T-cell (primary cell): ENCODE measurements at regions of chrX and their contacts with region 1.

Region 1: GRCh38 chrX:136028251-136028984 is 43.2 kb downstream of the SLC9A6 start:
- DNase-seq: peak in 2 of 35 experiments; percentile 1 to 69
- ATAC-seq: peak; percentile 52 to 66 (median 56)
- H3K4me3 ChIP-seq: no peak overlapping the region
- H3K4me3 Mint-ChIP-seq: no peak overlapping the region
- H3K27ac ChIP-seq: no peak overlapping the region
- H3K27ac Mint-ChIP-seq: no peak overlapping the region
- H3K4me1 ChIP-seq: no peaks in the 10 kb centered on the region
- H3K4me1 Mint-ChIP-seq: no peaks in the 10 kb centered on the region
- H3K27me3 ChIP-seq: no peaks in the 10 kb centered on the region
- H3K27me3 Mint-ChIP-seq: peaks cover 0 to 10% of the 10 kb centered on the region in 2 donors

Region 2: DNA sequence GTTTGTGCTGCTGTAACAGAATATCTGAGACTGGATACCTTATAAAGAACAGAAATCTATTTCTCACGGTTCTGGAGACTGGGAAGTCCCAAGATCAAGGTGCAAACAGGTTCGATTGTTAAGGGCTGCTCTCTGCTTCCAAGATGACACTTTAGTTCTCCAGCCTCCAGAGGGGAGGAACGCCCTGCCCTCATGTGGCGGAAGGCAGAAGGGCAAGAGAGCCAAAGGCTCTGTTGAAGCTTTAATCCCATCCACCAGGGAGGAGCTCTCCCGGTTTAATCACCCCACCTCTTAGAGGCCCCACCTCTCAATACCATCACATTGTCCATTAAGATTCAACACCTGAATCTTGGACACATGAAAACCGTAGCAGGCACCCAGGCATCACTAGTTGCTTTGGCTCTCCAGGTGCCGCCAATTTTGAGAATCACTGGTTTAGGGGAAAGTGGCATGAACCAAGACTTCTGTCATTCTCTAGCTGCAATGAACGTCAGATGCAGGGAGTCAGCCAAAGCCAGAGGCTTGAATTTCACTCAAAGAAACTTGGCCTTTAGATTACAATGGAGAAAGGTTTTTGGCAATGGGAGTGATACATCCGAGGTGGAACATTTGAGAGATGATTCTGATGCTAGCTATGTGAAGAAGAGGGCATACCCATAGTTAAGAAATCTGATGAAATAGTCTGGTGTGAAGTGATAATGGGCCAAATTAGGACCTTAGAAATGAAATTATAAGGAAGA is 134.6 kb after region 1 on chrX:
- CTCF ChIA-PET with region 1: interaction called, 22 to 50 read pairs
- POLR2A ChIA-PET with region 1: interaction called in 1 of 2 experiments, 3 read pairs
- DNase-seq: peak in 25 of 35 experiments; percentile 16 to 56 (median 32)
- ATAC-seq: peak in 3 of 4 experiments; percentile 55 to 74 (median 58)
- H3K4me3 ChIP-seq: no peak overlapping the region
- H3K4me3 Mint-ChIP-seq: no peak overlapping the region
- H3K27ac ChIP-seq: no peak overlapping the region
- H3K27ac Mint-ChIP-seq: no peak overlapping the region
- H3K4me1 ChIP-seq: no peaks in the 10 kb centered on the region
- H3K4me1 Mint-ChIP-seq: peaks cover 5 to 13% (median 10%) of the 10 kb centered on the region in 3 donors
- H3K27me3 ChIP-seq: no peaks in the 10 kb centered on the region
- H3K27me3 Mint-ChIP-seq: peaks cover 0 to 17% of the 10 kb centered on the region in 2 donors

Region 3: DNA sequence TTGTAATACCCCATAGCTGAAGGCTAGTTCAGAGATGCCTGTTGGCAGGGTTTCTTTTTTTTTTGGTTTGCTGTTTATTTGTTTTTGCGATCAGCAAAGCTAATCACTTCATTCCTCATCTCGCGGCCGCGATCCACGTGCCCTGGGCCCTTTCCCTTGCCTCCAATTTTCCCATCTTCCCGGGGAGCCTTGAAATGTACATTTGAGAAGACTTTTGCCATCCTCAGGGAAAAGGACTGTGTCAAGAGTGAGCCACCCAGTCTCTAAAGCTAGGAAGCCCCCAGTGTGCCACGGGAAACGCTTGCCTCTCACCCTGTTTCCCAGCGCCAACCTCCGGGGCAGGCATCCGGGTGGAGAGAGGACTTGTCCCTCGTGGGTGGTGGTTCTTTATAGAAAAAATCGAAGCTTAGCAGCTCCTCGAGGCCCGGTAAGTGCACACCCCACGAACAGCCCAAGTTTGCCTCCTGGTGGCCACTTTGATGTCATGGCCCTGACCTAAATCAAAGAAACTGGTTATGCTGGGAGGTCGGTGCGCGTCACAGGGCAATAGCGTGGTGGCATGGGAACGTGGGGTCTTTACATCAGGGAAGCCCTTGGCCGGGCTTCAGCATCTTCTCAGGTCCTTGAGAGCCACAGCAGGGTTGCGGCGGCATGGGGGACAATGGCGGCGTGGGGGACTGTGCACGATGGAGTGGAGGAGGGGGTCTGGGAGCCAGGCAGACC is 180.8 kb after region 1 on chrX:
- CTCF ChIA-PET with region 1: interaction called, 6 to 40 read pairs
- POLR2A ChIA-PET with region 1: interaction called in 1 of 2 experiments, 7 read pairs
- DNase-seq: peak in 31 of 35 experiments; percentile 6 to 63 (median 30)
- ATAC-seq: peak in 3 of 4 experiments; percentile 43 to 60 (median 54)
- H3K4me3 ChIP-seq: no peak overlapping the region
- H3K4me3 Mint-ChIP-seq: no peak overlapping the region
- H3K27ac ChIP-seq: no peak overlapping the region
- H3K27ac Mint-ChIP-seq: no peak overlapping the region
- H3K4me1 ChIP-seq: peaks cover 5 to 17% of the 10 kb centered on the region in 2 experiments
- H3K4me1 Mint-ChIP-seq: peaks cover 8 to 26% (median 17%) of the 10 kb centered on the region in 3 donors
- H3K27me3 ChIP-seq: no peaks in the 10 kb centered on the region
- H3K27me3 Mint-ChIP-seq: peaks cover 0 to 11% of the 10 kb centered on the region in 2 donors

Region 4: DNA sequence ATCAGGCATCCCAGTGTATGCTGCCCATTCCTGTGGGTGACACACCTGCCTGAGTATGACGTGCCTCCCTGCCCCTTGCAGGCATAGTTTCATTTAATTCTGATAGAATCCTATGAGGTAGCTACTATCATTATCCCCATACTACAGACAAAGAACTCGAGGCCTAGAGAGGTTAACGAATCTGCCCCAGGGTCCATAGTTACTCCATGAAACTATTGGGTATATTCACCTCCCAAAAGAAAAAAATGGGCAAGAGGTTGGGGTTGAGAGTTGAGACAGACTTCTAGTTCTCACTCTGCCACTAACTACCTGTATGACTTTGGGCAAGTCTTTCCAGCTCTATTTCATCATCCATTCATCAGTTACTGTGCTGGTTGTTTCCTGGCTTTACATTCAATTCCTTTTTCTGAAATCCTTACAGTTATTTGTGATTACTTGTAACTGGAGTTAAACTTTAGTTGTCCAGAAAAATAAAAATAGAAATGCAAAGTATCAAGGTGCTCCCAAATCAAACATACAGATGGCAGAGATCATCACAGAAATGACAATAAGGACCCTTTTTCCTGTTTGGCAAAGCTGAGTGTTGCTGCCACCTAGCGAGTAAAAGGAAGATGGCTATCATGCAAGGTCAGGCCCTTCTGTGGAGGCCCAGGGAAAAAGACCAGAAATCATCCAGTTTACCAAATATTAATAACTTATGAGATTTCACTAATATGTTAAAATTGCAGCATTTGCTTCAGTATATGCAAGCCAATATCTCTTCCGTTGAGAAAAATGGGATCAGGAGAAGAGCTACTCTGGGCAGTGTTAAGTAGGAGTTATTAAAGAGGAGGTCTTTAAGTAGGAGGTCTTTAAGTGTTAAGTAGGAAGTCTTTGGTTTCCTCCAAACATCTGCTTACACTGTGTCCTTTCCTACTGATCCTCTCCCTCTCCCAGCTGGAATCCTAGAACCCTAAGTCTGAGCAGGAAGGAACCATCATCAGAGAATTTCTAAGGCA is 239.9 kb after region 1 on chrX:
- CTCF ChIA-PET with region 1: interaction called, 13 to 30 read pairs
- POLR2A ChIA-PET with region 1: no interaction called
- DNase-seq: peak in 29 of 35 experiments; percentile 2 to 69 (median 24)
- ATAC-seq: peak in 3 of 4 experiments; percentile 47 to 66 (median 60)
- H3K4me3 ChIP-seq: no peak overlapping the region
- H3K4me3 Mint-ChIP-seq: no peak overlapping the region
- H3K27ac ChIP-seq: no peak overlapping the region
- H3K27ac Mint-ChIP-seq: no peak overlapping the region
- H3K4me1 ChIP-seq: no peaks in the 10 kb centered on the region
- H3K4me1 Mint-ChIP-seq: no peaks in the 10 kb centered on the region
- H3K27me3 ChIP-seq: no peaks in the 10 kb centered on the region
- H3K27me3 Mint-ChIP-seq: peaks cover 0 to 18% of the 10 kb centered on the region in 2 donors

Region 5: GRCh38 chrX:136564698-136565097 is 536.3 kb after region 1 on chrX:
- CTCF ChIA-PET with region 1: no interaction called
- POLR2A ChIA-PET with region 1: no interaction called
- DNase-seq: no peak
- ATAC-seq: no peak
- H3K4me3 ChIP-seq: no peak overlapping the region
- H3K4me3 Mint-ChIP-seq: no peak overlapping the region
- H3K27ac ChIP-seq: no peak overlapping the region
- H3K27ac Mint-ChIP-seq: no peak overlapping the region
- H3K4me1 ChIP-seq: no peaks in the 10 kb centered on the region
- H3K4me1 Mint-ChIP-seq: peaks cover 0 to 10% (median 4%) of the 10 kb centered on the region in 3 donors
- H3K27me3 ChIP-seq: no peaks in the 10 kb centered on the region
- H3K27me3 Mint-ChIP-seq: peaks cover 0 to 5% of the 10 kb centered on the region in 2 donors